Heart left ventricle (tissue), 16 donors: ENCODE measurements at regions of chr9 and their contacts with region 1.

Region 1: GRCh38 chr9:91361291-91362050 is at the start of gene AUH:
- DNase-seq: peak; percentile 87 to 95 (median 88)
- ATAC-seq: peak; percentile 89 to 100 (median 98)
- H3K4me3 ChIP-seq: peak within 1 kb of the TSS; percentile 93 to 100 (median 98)
- H3K27ac ChIP-seq: peak within 1 kb of the TSS; percentile 67 to 97 (median 92)
- H3K4me1 ChIP-seq: peaks cover 0 to 43% (median 28%) of the 10 kb centered on the region in 12 donors
- H3K27me3 ChIP-seq: no peaks in the 10 kb centered on the region
- CTCF ChIP-seq: no peak
- POLR2A ChIP-seq: peak in 1 of 2 donors; percentile 61
- total RNA-seq, gene AUH: 28.5 to 54.7 (median 39.7) TPM

Region 2: GRCh38 chr9:91036826-91037510 is 324.5 kb before region 1 on chr9:
- intact Hi-C with region 1: loop called in 1 of 10 experiments (anchors 5 kb)
- DNase-seq: peak; percentile 76 to 82 (median 78)
- ATAC-seq: peak; percentile 86 to 99 (median 98)
- H3K4me3 ChIP-seq: no peak overlapping the region
- H3K27ac ChIP-seq: no peak overlapping the region
- H3K4me1 ChIP-seq: peaks cover 0 to 20% (median 10%) of the 10 kb centered on the region in 12 donors
- H3K27me3 ChIP-seq: peaks cover 0 to 7% (median 0%) of the 10 kb centered on the region in 9 donors
- CTCF ChIP-seq: peak; percentile 55 to 78 (median 64)
- POLR2A ChIP-seq: no peak

Region 3: DNA sequence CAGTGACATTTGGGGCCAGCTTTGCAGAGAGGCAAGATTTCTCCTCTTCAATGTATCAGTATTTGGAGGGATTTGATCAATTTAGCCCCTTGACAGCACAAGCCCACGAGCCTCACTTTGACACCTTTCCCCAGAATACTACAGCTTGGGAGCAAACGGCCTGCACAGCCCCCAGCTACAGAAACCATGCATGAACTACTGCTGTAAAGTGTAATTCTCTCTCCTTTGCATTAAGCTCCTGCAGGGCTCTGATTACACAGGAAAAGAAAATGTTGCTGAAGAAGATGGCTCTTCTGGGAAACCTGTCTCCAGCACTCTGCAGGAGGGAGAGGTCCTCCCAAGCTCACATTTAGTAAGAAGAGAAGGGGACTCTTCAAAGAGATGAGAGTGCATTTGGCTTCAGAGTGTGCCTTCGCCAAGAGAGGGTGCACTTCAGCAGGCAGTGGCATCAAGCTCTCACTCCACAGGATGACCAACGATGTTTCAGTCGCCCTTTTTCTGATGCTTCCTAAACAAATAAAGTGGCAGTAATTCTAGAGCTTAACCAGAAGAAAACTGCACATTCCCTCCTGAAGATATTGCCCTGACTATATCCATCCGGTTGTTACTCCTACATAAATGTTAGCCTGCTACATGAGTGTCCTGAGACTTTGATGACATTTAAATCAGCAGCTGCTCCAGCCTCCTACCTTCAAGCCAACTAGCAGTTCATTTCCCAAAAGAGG is 271.9 kb before region 1 on chr9:
- intact Hi-C with region 1: loop called in 1 of 10 experiments (anchors 10 kb)
- DNase-seq: peak in 1 of 5 donors; percentile 40
- ATAC-seq: peak; percentile 76 to 89 (median 82)
- H3K4me3 ChIP-seq: no peak overlapping the region
- H3K27ac ChIP-seq: no peak overlapping the region
- H3K4me1 ChIP-seq: peaks cover 0 to 10% (median 0%) of the 10 kb centered on the region in 12 donors
- H3K27me3 ChIP-seq: no peaks in the 10 kb centered on the region
- CTCF ChIP-seq: peak; percentile 20 to 68 (median 52)
- POLR2A ChIP-seq: no peak

Region 4: GRCh38 chr9:91305596-91306295 is 55.7 kb before region 1 on chr9:
- intact Hi-C with region 1: loop called in 1 of 10 experiments (anchors 5 kb)
- DNase-seq: no peak
- ATAC-seq: peak in 1 of 4 donors; percentile 16
- H3K4me3 ChIP-seq: no peak overlapping the region
- H3K27ac ChIP-seq: peak overlapping the region in 1 of 12 donors; percentile 27
- H3K4me1 ChIP-seq: peaks cover 0 to 40% (median 19%) of the 10 kb centered on the region in 12 donors
- H3K27me3 ChIP-seq: no peaks in the 10 kb centered on the region
- CTCF ChIP-seq: no peak
- POLR2A ChIP-seq: no peak